Heart right ventricle (tissue), 16 donors: ENCODE measurements at regions of chr4 and their contacts with region 1.

Region 1: GRCh38 chr4:121096629-121097028 is 24.3 kb upstream of the NDNF start:
- DNase-seq: no peak
- ATAC-seq: no peak
- H3K4me3 ChIP-seq: no peak overlapping the region
- H3K27ac ChIP-seq: no peak overlapping the region
- H3K4me1 ChIP-seq: no peaks in the 10 kb centered on the region
- H3K27me3 ChIP-seq: peaks cover 0 to 8% (median 0%) of the 10 kb centered on the region in 7 donors
- CTCF ChIP-seq: peak; percentile 40 to 81 (median 72)

Region 2: DNA sequence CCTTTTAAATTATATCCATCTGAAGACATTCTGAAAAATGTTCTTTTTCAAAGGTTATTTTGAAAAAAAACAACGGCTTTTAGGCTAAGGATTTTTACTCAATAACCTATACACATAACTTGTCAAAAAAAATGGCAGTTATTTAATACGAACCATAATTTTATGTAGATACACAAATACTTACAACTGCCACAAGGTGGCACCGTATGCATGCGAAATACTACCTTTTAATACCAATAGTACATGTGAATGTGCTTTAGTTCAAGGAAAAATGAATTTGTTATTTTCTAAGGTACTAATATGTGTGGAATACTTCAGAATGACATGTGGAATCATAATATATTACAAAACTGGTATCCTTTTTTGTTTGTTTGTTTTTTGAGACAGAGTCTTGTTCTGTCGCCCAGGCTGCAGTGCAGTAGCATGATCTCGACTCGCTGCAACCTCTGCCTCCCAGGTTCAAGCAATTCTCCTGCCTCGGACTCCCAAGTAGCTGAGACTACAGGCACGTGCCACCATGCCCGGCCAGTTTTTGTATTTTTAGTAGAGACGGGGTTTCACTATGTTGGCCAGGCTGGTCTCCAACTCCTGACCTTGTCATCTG is 1025.3 kb before region 1 on chr4:
- intact Hi-C with region 1: loop called in 7 of 10 experiments (anchors 1 to 10 kb)
- DNase-seq: no peak
- ATAC-seq: no peak
- H3K4me3 ChIP-seq: no peak overlapping the region
- H3K27ac ChIP-seq: no peak overlapping the region
- H3K4me1 ChIP-seq: peaks cover 0 to 37% (median 27%) of the 10 kb centered on the region in 9 donors
- H3K27me3 ChIP-seq: no peaks in the 10 kb centered on the region
- CTCF ChIP-seq: peak; percentile 54 to 80 (median 60)

Region 3: DNA sequence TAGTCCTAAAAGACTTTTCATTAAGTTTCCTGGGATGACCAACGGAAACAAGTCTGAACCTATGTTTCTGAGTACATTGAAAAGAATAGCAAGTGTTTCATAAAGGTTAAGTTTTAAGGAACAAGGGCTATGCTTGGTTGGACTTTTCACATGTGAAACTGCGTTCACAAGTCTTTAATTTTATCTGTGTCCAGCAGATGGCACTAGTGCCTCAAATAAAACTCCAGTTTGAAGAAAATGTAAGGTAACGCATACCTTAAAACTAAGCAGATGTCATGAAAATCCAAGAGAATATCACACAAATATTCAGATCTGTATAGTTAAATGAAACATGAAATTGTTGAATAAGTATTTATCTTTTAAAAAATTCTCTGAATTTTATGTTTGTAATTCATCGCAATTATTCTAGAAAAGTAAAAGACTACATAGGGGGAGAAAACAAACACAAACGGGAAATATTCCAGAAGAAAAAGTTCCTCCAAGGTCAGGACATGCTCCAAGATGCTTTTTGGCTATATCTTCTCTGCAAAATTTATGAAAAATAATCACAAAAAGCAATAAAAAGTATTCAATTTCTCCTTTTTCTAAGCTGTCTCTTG is 940.4 kb before region 1 on chr4:
- intact Hi-C with region 1: loop called (anchors 2 to 10 kb)
- DNase-seq: peak in 1 of 2 donors; percentile 19
- ATAC-seq: peak in 1 of 8 donors; percentile 52
- H3K4me3 ChIP-seq: no peak overlapping the region
- H3K27ac ChIP-seq: no peak overlapping the region
- H3K4me1 ChIP-seq: no peaks in the 10 kb centered on the region
- H3K27me3 ChIP-seq: no peaks in the 10 kb centered on the region
- CTCF ChIP-seq: peak; percentile 44 to 80 (median 69)

Region 4: DNA sequence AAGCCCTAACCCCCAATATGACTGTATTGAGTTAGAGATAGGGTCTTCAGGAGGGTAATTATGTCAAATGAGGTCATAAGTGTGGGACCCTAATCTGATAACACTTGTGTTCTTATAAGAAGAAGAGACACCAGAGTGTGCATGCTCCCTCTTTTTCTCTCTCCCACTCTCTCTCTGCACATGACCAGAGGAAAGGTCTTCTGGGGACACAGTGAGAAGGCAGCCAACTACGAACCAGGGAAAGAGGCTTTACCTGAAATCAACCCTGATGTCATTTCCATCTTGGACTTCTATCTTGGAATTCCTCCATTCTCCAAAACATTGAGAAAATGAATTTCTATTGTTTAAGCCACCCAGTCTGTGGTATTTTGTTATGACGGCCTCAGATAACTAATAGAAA is 932.7 kb before region 1 on chr4:
- intact Hi-C with region 1: loop called in 5 of 10 experiments (anchors 5 to 10 kb)
- DNase-seq: no peak
- ATAC-seq: peak in 3 of 8 donors; percentile 44 to 67 (median 53)
- H3K4me3 ChIP-seq: no peak overlapping the region
- H3K27ac ChIP-seq: no peak overlapping the region
- H3K4me1 ChIP-seq: peaks cover 0 to 16% (median 7%) of the 10 kb centered on the region in 9 donors
- H3K27me3 ChIP-seq: no peaks in the 10 kb centered on the region
- CTCF ChIP-seq: no peak

Region 5: DNA sequence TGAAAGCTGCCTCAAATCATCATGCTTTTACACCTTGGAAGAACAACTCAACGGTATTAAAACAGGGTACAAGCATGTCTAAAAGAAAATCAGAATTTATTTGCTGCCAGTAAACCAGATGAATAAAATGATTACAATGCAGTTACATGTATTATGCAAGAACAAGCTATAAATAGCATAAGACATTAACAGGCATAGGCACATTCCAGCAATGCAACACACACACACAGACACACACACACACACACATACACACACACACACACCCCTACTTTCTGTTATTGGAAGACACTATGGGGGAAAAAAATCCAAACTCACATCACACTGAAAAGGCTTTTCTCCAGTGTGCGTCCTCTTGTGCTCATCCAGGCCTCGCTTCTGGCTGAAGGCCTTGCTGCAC is 386.6 kb before region 1 on chr4:
- intact Hi-C with region 1: loop called in 6 of 10 experiments (anchors 5 to 10 kb)
- DNase-seq: no peak
- ATAC-seq: peak in 3 of 8 donors; percentile 56 to 79 (median 59)
- H3K4me3 ChIP-seq: no peak overlapping the region
- H3K27ac ChIP-seq: peak overlapping the region in 3 of 10 donors; percentile 11 to 42 (median 22)
- H3K4me1 ChIP-seq: peaks cover 0 to 6% (median 0%) of the 10 kb centered on the region in 9 donors
- H3K27me3 ChIP-seq: no peaks in the 10 kb centered on the region
- CTCF ChIP-seq: no peak

Region 6: GRCh38 chr4:120718979-120719566 is 377.6 kb before region 1 on chr4:
- intact Hi-C with region 1: loop called in 7 of 10 experiments (anchors 5 to 10 kb)
- DNase-seq: peak in 1 of 2 donors; percentile 33
- ATAC-seq: peak; percentile 79 to 96 (median 89)
- H3K4me3 ChIP-seq: peak overlapping the region in 1 of 10 donors; percentile 14
- H3K27ac ChIP-seq: no peak overlapping the region
- H3K4me1 ChIP-seq: peaks cover 0 to 18% (median 5%) of the 10 kb centered on the region in 9 donors
- H3K27me3 ChIP-seq: no peaks in the 10 kb centered on the region
- CTCF ChIP-seq: peak; percentile 40 to 76 (median 72)

Region 7: DNA sequence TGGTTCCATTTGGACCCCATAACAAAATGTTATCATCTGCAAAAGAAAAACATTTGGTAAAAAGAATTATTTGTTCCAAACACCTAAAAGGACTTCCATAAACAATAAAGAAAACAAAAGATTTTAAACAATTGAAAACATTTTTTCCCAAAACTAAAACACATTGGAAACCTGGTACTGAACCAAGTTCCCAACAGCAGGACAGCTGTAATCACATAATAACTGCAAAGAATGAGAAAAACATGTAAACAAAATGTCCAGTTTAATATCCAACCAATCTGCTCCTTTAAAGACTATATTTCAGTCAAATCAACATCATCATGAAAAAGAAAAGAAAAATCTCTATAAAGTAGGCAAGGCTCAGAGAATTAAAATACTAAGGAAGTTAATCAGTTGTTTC is 210.4 kb before region 1 on chr4:
- intact Hi-C with region 1: no loop called
- DNase-seq: no peak
- ATAC-seq: no peak
- H3K4me3 ChIP-seq: no peak overlapping the region
- H3K27ac ChIP-seq: no peak overlapping the region
- H3K4me1 ChIP-seq: peaks cover 0 to 4% (median 0%) of the 10 kb centered on the region in 9 donors
- H3K27me3 ChIP-seq: no peaks in the 10 kb centered on the region
- CTCF ChIP-seq: no peak

Region 8: GRCh38 chr4:121016630-121017029 is 80.0 kb before region 1 on chr4:
- intact Hi-C with region 1: loop called in 3 of 10 experiments (anchors 5 kb)
- DNase-seq: no peak
- ATAC-seq: no peak
- H3K4me3 ChIP-seq: no peak overlapping the region
- H3K27ac ChIP-seq: no peak overlapping the region
- H3K4me1 ChIP-seq: peaks cover 0 to 6% (median 0%) of the 10 kb centered on the region in 9 donors
- H3K27me3 ChIP-seq: no peaks in the 10 kb centered on the region
- CTCF ChIP-seq: no peak

Region 9: DNA sequence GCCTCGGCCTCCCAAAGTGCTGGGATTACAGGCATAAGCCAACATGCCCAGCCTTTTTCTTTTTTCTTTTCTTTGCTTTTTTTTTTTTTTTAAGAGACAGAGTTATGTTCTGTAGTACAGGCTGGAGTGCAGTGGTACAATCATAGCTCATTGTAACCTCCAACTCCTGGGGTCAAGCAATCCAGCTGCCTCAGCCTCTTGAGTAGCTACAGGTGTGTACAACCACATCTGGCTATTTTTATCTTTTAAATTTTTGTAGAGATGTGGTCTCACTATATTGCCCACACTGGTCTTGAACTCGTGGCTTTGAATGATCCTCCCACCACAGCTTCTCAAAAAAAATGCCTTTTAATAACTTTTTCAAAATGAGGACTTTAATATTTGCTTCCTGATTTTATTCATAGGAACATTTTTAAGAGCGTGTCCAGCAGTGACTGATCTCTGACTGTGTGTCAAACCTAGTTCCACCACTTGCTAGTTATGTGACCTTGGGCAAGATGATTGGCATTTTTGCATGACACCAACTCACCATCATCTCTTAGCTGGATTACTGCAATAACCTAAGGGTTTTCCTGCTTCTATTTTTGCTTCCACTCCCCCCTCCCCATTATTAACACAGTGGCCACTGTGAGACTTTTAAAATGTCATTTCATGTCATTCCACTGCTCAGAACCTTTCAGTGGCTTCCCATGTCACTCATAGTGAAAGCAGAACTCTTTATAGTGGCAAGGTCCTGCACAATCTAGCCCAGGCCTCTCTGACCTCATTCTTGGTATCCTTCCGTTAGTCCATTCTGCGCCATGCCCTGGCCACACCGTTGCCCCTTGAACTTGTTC is 72.0 kb after region 1 on chr4:
- intact Hi-C with region 1: no loop called
- DNase-seq: no peak
- ATAC-seq: peak in 3 of 8 donors; percentile 44 to 61 (median 58)
- H3K4me3 ChIP-seq: no peak overlapping the region
- H3K27ac ChIP-seq: no peak overlapping the region
- H3K4me1 ChIP-seq: peaks cover 0 to 18% (median 0%) of the 10 kb centered on the region in 9 donors
- H3K27me3 ChIP-seq: peaks cover 0 to under 1% (median 0%) of the 10 kb centered on the region in 7 donors
- CTCF ChIP-seq: no peak

Region 10: DNA sequence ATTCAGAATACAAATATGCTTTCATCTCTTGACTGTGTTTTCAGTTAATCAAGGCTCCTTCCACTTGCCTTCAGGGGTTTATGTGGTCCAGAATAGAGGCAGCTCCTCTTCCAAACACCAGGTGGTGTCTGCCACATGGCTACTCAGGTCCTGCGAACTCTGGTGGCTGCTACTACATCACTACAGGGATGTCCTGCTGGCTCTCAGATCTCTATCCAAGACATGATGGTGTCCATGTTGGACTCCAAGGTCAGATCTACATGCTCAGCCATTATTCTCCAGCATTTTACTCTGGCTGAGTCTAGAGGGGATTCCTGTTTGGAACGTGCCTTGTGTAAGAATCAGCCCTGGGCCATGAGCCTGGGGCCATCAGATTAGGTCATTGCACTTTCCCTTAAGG is 181.0 kb after region 1 on chr4:
- intact Hi-C with region 1: no loop called
- DNase-seq: no peak
- ATAC-seq: no peak
- H3K4me3 ChIP-seq: no peak overlapping the region
- H3K27ac ChIP-seq: no peak overlapping the region
- H3K4me1 ChIP-seq: no peaks in the 10 kb centered on the region
- H3K27me3 ChIP-seq: peaks cover 0 to 9% (median 4%) of the 10 kb centered on the region in 7 donors
- CTCF ChIP-seq: peak in 3 of 9 donors; percentile 13 to 36 (median 24)